Cardiac septum (tissue), 1 donor: ENCODE measurements at regions of chr3 and their contacts with region 1.

Region 1: DNA sequence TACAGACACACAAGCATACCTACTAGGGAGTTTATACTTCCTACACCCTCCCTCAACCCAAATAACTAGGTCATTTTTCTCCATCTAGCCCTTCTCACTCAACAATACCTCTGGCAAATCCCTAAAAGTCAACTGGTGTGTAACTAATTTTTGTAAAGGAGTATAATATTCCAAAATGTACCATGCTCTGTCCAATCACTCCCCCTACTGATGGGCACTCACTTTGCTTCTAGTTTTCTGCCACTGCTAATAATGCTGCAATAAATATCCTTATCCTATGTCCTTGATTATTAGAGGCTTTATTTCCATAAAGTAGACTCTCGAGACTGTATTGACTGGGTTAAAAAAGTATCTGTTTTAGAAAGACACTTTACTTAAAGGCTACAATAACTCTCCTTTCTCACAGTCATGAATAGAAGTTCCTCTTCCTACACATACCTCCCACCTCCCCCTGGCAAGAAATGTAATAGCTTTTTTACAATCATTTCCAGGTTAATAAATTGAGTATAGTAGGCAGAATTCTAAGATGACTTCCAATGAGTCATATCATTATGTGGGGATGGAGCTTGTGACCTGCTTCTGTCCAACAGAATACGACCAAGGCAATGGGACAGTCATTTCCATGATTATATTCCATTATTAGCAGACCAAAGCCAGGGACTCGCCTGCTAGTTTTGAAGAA is 30.0 kb downstream of the SHQ1 start:
- DNase-seq: no peak

Region 2: GRCh38 chr3:71725279-71725991 is 1092.8 kb before region 1 on chr3 and contains the start of gene EIF4E3:
- intact Hi-C with region 1: loop called (anchors 5 kb)
- DNase-seq: no peak
- total RNA-seq, gene EIF4E3: 54.7 TPM

Region 3: GRCh38 chr3:71955240-71956068 is 862.8 kb before region 1 on chr3:
- intact Hi-C with region 1: loop called (anchors 5 kb)
- DNase-seq: peak; percentile 81

Region 4: GRCh38 chr3:72270072-72270681 is 548.1 kb before region 1 on chr3:
- intact Hi-C with region 1: loop called (anchors 10 kb)
- DNase-seq: peak; percentile 90

Region 5: DNA sequence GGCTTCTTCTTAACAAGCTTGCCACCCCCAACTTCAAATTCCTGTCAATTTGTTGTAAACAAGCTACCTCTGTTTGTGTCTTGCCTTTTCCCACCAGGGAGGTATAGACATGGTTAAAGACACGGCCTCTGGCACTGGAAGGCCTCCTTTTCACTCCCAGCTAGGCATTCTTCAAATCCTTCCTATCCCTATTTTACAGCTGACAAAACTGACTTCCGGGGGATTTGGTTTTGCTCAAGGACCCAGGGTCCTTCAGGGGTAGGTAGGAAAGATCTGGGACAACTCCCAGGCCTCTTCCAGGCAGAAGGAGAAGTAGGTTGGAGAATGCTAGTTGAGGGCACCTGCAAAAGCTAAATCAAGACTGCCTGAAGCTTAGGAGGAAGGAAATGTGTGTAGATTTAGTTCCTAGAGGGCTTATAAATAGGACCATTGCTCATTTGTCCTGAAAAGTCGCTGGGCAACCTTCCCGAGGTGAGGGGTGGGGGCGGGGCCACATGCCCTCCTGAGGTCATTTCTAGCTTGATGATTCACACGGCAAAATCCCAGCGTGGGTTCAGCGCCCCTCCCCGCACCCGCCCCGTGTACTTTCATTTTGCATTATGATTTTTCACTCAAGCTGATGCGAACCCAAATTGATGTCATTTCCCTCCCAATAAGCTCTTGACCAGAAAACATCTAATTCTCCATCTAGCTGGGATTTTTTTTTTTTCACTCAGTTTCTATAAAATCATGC is 335.5 kb before region 1 on chr3:
- intact Hi-C with region 1: loop called (anchors 5 kb)
- DNase-seq: peak; percentile 84

Region 6: GRCh38 chr3:72960812-72961518 is 142.7 kb after region 1 on chr3:
- intact Hi-C with region 1: no loop called
- DNase-seq: no peak